Motor neuron (in vitro differentiated cells): ENCODE measurements at regions of chr11 and their contacts with region 1.

Region 1: GRCh38 chr11:59283825-59284772 is 71.4 kb upstream of the MPEG1 start:
- ATAC-seq: peak in 3 of 8 experiments; percentile 12 to 49 (median 31)
- H3K4me3 ChIP-seq: no peak overlapping the region
- H3K27ac ChIP-seq: no peak overlapping the region
- H3K4me1 ChIP-seq: no peaks in the 10 kb centered on the region

Region 2: GRCh38 chr11:59186130-59186594 is 97.9 kb before region 1 on chr11:
- in situ Hi-C with region 1: loop called in 1 of 9 experiments (anchors 25 kb)
- ATAC-seq: peak in 4 of 8 experiments; percentile 5 to 72 (median 30)
- H3K4me3 ChIP-seq: no peak overlapping the region
- H3K27ac ChIP-seq: peak overlapping the region; percentile 84 to 87
- H3K4me1 ChIP-seq: peaks cover 43 to 55% of the 10 kb centered on the region in 2 donors